Naive thymus-derived CD4-positive, alpha-beta T cell (primary cell): ENCODE measurements at regions of chr13 and their contacts with region 1.

Region 1: GRCh38 chr13:112873851-112874750 is 94.9 kb upstream of the MCF2L start:
- DNase-seq: peak in 5 of 9 donors; percentile 25 to 75 (median 50)
- ATAC-seq: peak; percentile 84
- H3K4me3 ChIP-seq: peak overlapping the region; percentile 8
- H3K4me3 Mint-ChIP-seq: peak overlapping the region in 8 of 10 donors; percentile 4 to 78 (median 67)
- H3K27ac ChIP-seq: no peak overlapping the region
- H3K27ac Mint-ChIP-seq: peak overlapping the region; percentile 86 to 95 (median 90)
- H3K4me1 ChIP-seq: peaks cover 0 to 17% of the 10 kb centered on the region in 2 donors
- H3K4me1 Mint-ChIP-seq: peaks cover 21 to 33% (median 28%) of the 10 kb centered on the region in 7 donors
- H3K27me3 ChIP-seq: no peaks in the 10 kb centered on the region
- H3K27me3 Mint-ChIP-seq: peaks cover 0 to 4% (median 0%) of the 10 kb centered on the region in 5 donors

Region 2: GRCh38 chr13:112638157-112638750 is 235.8 kb before region 1 on chr13:
- CTCF ChIA-PET with region 1: no interaction called
- POLR2A ChIA-PET with region 1: no interaction called
- intact Hi-C with region 1: loop called in 1 of 2 experiments (anchors 1 kb)
- DNase-seq: peak in 1 of 9 donors; percentile 4
- ATAC-seq: no peak
- H3K4me3 ChIP-seq: no peak overlapping the region
- H3K4me3 Mint-ChIP-seq: peak overlapping the region in 4 of 10 donors; percentile 4 to 41 (median 36)
- H3K27ac ChIP-seq: no peak overlapping the region
- H3K27ac Mint-ChIP-seq: no peak overlapping the region
- H3K4me1 ChIP-seq: no peaks in the 10 kb centered on the region
- H3K4me1 Mint-ChIP-seq: peaks cover 4 to 35% (median 9%) of the 10 kb centered on the region in 7 donors
- H3K27me3 ChIP-seq: no peaks in the 10 kb centered on the region
- H3K27me3 Mint-ChIP-seq: peaks cover 12 to 31% (median 25%) of the 10 kb centered on the region in 5 donors

Region 3: GRCh38 chr13:113267642-113268405 is 393.7 kb after region 1 on chr13:
- CTCF ChIA-PET with region 1: no interaction called
- POLR2A ChIA-PET with region 1: no interaction called
- intact Hi-C with region 1: no loop called
- DNase-seq: no peak
- ATAC-seq: no peak
- H3K4me3 ChIP-seq: no peak overlapping the region
- H3K4me3 Mint-ChIP-seq: peak overlapping the region in 1 of 10 donors; percentile 23
- H3K27ac ChIP-seq: no peak overlapping the region
- H3K27ac Mint-ChIP-seq: peak overlapping the region in 2 of 9 donors; percentile 29 to 73
- H3K4me1 ChIP-seq: no peaks in the 10 kb centered on the region
- H3K4me1 Mint-ChIP-seq: no peaks in the 10 kb centered on the region
- H3K27me3 ChIP-seq: no peaks in the 10 kb centered on the region
- H3K27me3 Mint-ChIP-seq: no peaks in the 10 kb centered on the region